ENCODE measurements at regions of chr12 and their contacts with region 1.

Region 1: DNA sequence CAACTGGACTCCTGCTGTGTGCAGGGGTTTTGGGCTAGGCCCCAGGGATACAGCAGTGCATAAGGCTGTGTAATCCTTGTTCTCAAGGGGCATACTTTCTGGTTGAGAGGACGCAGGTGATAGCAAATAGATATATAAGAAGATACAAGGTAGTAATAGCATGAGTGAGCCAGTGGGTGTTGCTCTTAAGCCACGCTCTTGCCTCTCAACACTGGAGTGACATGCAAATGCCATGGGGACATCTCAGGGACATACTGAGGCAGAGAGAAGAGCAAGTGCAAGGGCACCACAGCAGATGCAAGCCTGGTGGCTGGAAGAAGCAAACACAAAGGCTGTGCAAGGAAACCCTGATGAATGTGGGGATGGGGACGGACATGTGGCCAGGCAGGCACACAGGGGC is 223.3 kb downstream of the CHST11 start:
- DNase-seq: peak; percentile 62
- ATAC-seq: peak; percentile 59
- H3K4me3 Mint-ChIP-seq: no peak overlapping the region
- H3K27ac Mint-ChIP-seq: peak overlapping the region; percentile 69
- H3K4me1 Mint-ChIP-seq: peaks cover 51% of the 10 kb centered on the region
- H3K27me3 Mint-ChIP-seq: no peaks in the 10 kb centered on the region

Region 2: DNA sequence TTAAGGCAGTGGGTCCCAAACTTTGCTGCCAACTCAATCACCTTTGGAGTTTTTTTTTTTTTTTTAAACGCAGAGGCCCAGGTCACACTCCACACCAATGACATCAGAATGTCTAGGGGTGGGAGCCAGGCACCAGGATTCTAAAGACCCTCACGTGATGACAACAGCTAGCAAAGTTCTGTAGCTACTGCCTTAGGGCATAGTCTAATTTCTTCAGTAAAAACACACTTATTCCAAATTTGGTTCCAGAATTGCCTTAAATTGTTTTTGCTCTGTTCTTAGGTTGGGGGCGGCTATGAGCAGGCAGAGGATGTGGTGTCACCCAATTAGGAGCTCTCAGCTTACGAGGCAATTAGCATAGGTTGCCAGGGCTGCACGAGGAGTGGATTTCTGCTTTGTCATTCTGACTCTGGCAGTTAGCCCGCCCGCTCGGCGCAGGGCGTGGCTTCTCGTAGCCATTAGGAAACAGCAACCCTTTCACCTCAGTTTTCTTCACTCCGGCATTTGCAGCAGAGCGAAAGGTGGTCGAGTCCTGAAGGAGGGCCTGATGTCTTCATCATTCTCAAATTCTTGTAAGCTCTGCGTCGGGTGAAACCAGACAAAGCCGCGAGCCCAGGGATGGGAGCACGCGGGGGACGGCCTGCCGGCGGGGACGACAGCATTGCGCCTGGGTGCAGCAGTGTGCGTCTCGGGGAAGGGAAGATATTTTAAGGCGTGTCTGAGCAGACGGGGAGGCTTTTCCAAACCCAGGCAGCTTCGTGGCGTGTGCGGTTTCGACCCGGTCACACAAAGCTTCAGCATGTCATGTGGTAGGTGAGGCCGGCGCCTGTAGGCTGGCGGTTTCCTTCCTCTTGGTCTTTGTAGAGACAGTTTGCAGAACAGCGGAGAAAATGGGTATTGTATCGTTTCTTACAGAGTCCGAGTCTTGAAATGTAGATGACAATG is 393.3 kb before region 1 on chr12:
- CTCF ChIA-PET with region 1: no interaction called
- POLR2A ChIA-PET with region 1: no interaction called
- intact Hi-C with region 1: loop called in 1 of 2 experiments (anchors 5 kb)
- DNase-seq: peak; percentile 95
- ATAC-seq: peak; percentile 84
- H3K4me3 Mint-ChIP-seq: peak overlapping the region; percentile 95
- H3K27ac Mint-ChIP-seq: peak overlapping the region; percentile 97
- H3K4me1 Mint-ChIP-seq: peaks cover 12% of the 10 kb centered on the region
- H3K27me3 Mint-ChIP-seq: no peaks in the 10 kb centered on the region

Region 3: DNA sequence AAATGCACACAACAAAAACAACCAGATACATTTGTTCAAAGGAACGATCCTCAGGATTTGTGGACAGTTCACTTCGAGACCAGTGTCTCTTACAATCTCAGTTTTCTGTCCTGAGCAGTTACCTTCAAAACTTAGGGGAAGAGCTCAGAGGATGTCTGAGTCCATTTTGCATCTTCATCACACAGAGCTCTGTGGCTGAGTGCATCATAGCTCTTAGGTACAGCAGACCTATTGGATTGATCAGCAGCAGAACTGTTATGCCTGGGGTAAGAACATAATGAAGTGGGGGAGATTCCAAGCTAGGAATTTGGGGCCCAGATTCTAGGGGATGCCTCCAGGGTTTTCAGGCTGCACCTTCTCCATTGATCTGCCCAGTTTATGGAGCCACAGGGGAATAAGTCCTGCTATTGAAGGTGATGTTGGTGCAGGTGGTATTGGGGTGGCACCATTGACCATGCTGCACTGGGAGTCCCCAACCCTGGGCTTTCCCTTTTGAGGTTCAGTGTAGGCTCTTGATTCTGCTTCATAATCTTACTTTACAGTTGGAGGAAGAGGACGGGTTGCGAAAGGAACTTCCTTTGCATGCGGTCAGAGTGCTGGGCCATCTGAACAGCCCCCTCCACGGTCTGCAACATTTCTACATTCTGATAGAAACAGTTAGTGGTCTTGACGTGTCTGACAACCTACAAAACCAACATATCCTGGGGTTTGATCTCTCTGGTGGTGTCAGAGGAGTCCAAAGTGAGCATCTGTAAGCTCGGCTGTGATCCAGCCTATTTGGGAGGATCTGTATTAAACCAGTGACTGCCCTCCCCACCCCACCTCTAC is 110.5 kb before region 1 on chr12:
- CTCF ChIA-PET with region 1: no interaction called
- POLR2A ChIA-PET with region 1: no interaction called
- intact Hi-C with region 1: loop called in 1 of 2 experiments (anchors 5 kb)
- DNase-seq: peak; percentile 61
- ATAC-seq: peak; percentile 67
- H3K4me3 Mint-ChIP-seq: no peak overlapping the region
- H3K27ac Mint-ChIP-seq: peak overlapping the region; percentile 33
- H3K4me1 Mint-ChIP-seq: peaks cover 49% of the 10 kb centered on the region
- H3K27me3 Mint-ChIP-seq: no peaks in the 10 kb centered on the region

Region 4: GRCh38 chr12:104825408-104825807 is 145.3 kb after region 1 on chr12:
- CTCF ChIA-PET with region 1: interaction called, 3 read pairs
- POLR2A ChIA-PET with region 1: no interaction called
- intact Hi-C with region 1: loop called in 1 of 2 experiments (anchors 1 kb)
- DNase-seq: no peak
- ATAC-seq: no peak
- H3K4me3 Mint-ChIP-seq: no peak overlapping the region
- H3K27ac Mint-ChIP-seq: no peak overlapping the region
- H3K4me1 Mint-ChIP-seq: peaks cover 5% of the 10 kb centered on the region
- H3K27me3 Mint-ChIP-seq: no peaks in the 10 kb centered on the region

Region 5: DNA sequence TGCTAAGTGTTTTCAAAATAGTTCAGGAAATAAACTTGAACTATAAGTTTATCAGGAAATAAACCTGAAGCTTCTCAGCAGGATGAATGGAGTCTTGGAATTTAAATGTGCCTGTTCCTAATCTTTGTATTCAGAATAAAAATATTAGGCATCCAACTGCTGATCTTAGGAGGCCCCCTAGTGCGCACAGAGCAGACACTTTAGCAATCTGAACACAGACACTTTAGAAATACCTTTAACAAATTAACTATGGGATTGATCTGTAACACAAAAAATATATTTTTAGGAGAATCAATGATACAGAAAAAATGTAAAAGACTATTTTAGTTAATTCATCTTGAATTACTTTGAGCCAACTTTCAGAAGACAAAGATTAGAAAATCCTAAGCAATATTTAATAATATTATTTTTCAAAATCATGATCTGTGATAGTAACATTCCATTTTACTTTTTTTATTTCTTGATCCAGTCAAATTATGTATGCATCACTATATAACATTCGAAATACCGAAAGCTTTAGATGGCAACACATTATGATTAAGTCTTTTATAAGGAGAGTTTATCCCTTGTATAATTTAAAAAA is 197.1 kb after region 1 on chr12:
- CTCF ChIA-PET with region 1: no interaction called
- POLR2A ChIA-PET with region 1: no interaction called
- intact Hi-C with region 1: loop called (anchors 1 to 2 kb)
- DNase-seq: peak; percentile 46
- ATAC-seq: peak; percentile 66
- H3K4me3 Mint-ChIP-seq: no peak overlapping the region
- H3K27ac Mint-ChIP-seq: no peak overlapping the region
- H3K4me1 Mint-ChIP-seq: no peaks in the 10 kb centered on the region
- H3K27me3 Mint-ChIP-seq: no peaks in the 10 kb centered on the region

Region 6: GRCh38 chr12:105053116-105053572 is 373.1 kb after region 1 on chr12:
- CTCF ChIA-PET with region 1: no interaction called
- POLR2A ChIA-PET with region 1: no interaction called
- intact Hi-C with region 1: loop called (anchors 1 to 5 kb)
- DNase-seq: peak; percentile 85
- ATAC-seq: peak; percentile 85
- H3K4me3 Mint-ChIP-seq: no peak overlapping the region
- H3K27ac Mint-ChIP-seq: no peak overlapping the region
- H3K4me1 Mint-ChIP-seq: peaks cover 4% of the 10 kb centered on the region
- H3K27me3 Mint-ChIP-seq: peaks cover 4% of the 10 kb centered on the region